ENCODE measurements at regions of chr11 and their contacts with region 1.

Region 1: GRCh38 chr11:130002846-130003716 is 446 bp upstream of the PRDM10 start:
- DNase-seq: peak; percentile 98
- ATAC-seq: peak; percentile 83
- H3K4me3 ChIP-seq: peak overlapping the region; percentile 62
- H3K27ac ChIP-seq: peak overlapping the region; percentile 90
- H3K4me1 ChIP-seq: no peaks in the 10 kb centered on the region
- H3K27me3 ChIP-seq: no peaks in the 10 kb centered on the region
- CTCF ChIP-seq: no peak
- POLR2A ChIP-seq: peak; percentile 92
- RAD21 ChIP-seq: 0 out of 2 replicates have a peak, but pooled peaks have one; percentile 23

Region 2: GRCh38 chr11:128981254-128981653 is 1021.8 kb before region 1 on chr11:
- CTCF ChIA-PET with region 1: no interaction called
- POLR2A ChIA-PET with region 1: interaction called, 19 read pairs
- dilution Hi-C with region 1: no loop called
- in situ Hi-C with region 1: no loop called
- intact Hi-C with region 1: no loop called
- DNase-seq: no peak
- ATAC-seq: no peak
- H3K4me3 ChIP-seq: no peak overlapping the region
- H3K27ac ChIP-seq: no peak overlapping the region
- H3K4me1 ChIP-seq: no peaks in the 10 kb centered on the region
- H3K27me3 ChIP-seq: no peaks in the 10 kb centered on the region
- CTCF ChIP-seq: no peak
- POLR2A ChIP-seq: no peak
- RAD21 ChIP-seq: no peak

Region 3: GRCh38 chr11:129453293-129453721 is 549.8 kb before region 1 on chr11:
- CTCF ChIA-PET with region 1: no interaction called
- POLR2A ChIA-PET with region 1: no interaction called
- dilution Hi-C with region 1: no loop called
- in situ Hi-C with region 1: no loop called
- intact Hi-C with region 1: no loop called
- DNase-seq: no peak
- ATAC-seq: no peak
- H3K4me3 ChIP-seq: no peak overlapping the region
- H3K27ac ChIP-seq: no peak overlapping the region
- H3K4me1 ChIP-seq: no peaks in the 10 kb centered on the region
- H3K27me3 ChIP-seq: no peaks in the 10 kb centered on the region
- CTCF ChIP-seq: no peak
- POLR2A ChIP-seq: no peak
- RAD21 ChIP-seq: no peak

Region 4: GRCh38 chr11:129828301-129828836 is 174.7 kb before region 1 on chr11:
- CTCF ChIA-PET with region 1: no interaction called
- POLR2A ChIA-PET with region 1: no interaction called
- dilution Hi-C with region 1: no loop called
- in situ Hi-C with region 1: no loop called
- intact Hi-C with region 1: no loop called
- DNase-seq: no peak
- ATAC-seq: no peak
- H3K4me3 ChIP-seq: no peak overlapping the region
- H3K27ac ChIP-seq: no peak overlapping the region
- H3K4me1 ChIP-seq: no peaks in the 10 kb centered on the region
- H3K27me3 ChIP-seq: 0 out of 2 replicates have a peak, but pooled peaks cover 2% of the 10 kb centered on the region
- CTCF ChIP-seq: no peak
- POLR2A ChIP-seq: no peak
- RAD21 ChIP-seq: no peak

Region 5: GRCh38 chr11:129881570-129882170 is 121.4 kb before region 1 on chr11:
- CTCF ChIA-PET with region 1: no interaction called
- POLR2A ChIA-PET with region 1: no interaction called
- dilution Hi-C with region 1: no loop called
- in situ Hi-C with region 1: no loop called
- intact Hi-C with region 1: no loop called
- DNase-seq: peak; percentile 21
- ATAC-seq: peak; percentile 85
- H3K4me3 ChIP-seq: no peak overlapping the region
- H3K27ac ChIP-seq: no peak overlapping the region
- H3K4me1 ChIP-seq: no peaks in the 10 kb centered on the region
- H3K27me3 ChIP-seq: no peaks in the 10 kb centered on the region
- CTCF ChIP-seq: peak; percentile 42
- POLR2A ChIP-seq: no peak
- RAD21 ChIP-seq: peak; percentile 46; the same call in 1 of the 2 replicates

Region 6: DNA sequence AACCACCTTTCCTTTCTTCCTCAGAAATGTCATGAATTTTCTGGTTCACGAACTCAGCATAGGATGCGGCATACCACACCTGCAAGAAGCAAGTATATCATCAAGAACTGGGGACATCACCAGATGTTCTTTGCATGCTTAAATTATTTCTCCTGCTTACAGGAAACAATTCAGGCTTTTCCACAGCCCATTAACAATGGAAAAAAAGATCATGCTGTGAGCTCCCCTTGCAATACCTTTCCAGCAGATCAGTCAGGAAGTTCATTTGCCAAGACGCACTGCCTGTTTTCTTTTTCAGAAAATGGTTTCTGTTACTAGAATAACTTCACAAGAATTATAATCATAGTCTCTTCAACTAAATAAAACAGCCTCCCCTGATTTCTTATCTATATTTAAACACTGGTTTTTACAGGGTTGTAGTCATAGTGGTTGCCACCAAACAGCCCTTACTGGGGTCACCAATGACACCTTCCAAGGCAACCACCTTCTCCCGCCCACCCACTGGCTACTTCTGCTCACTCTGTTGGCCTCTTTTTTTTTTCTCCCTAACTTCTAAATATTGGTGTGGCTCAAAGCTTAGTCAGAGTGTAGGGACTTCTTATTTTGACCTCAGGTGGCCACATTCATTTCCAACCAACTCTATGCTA is 65.4 kb before region 1 on chr11:
- CTCF ChIA-PET with region 1: no interaction called
- POLR2A ChIA-PET with region 1: no interaction called
- dilution Hi-C with region 1: no loop called
- in situ Hi-C with region 1: no loop called
- intact Hi-C with region 1: no loop called
- DNase-seq: no peak
- ATAC-seq: no peak
- H3K4me3 ChIP-seq: no peak overlapping the region
- H3K27ac ChIP-seq: no peak overlapping the region
- H3K4me1 ChIP-seq: no peaks in the 10 kb centered on the region
- H3K27me3 ChIP-seq: no peaks in the 10 kb centered on the region
- CTCF ChIP-seq: no peak
- POLR2A ChIP-seq: no peak
- RAD21 ChIP-seq: no peak

Region 7: DNA sequence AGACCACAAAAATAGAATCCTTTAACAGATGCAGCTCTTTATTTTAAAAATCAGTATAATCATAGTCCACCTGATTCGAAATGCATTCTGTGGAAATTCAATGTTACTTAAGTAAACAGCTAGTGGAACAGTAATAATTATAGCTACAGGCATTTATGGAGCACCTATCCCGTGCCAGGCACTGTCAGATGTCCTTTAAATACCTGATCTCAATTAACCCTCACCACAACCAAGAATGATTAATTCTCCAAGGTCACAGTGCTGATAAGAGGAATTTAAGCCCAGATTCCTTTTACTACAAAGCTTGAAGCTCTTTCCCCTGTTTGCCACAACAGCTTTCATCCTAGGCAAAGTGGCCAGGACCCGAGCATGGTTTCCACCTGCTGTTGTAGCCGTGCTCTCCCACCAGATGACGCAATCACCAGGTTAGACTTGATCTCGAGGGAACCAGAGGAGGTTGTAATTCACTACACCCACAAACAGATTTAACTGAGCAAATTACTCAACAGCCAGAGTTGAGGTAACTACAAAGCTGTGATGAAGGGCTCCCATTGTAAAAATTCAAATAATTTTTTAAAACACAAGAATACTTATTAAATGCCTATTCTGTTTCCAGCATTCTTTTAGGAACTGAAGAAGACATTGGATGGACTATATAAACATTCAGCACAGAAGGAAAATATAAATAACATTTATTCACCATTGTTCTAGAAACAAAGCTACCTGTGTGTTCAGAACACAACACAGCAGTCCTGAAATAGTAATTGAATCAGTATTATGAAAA is 10.7 kb before region 1 on chr11:
- CTCF ChIA-PET with region 1: no interaction called
- POLR2A ChIA-PET with region 1: interaction called, 19 read pairs
- dilution Hi-C with region 1: no loop called
- in situ Hi-C with region 1: no loop called
- intact Hi-C with region 1: no loop called
- DNase-seq: peak; percentile 22
- ATAC-seq: no peak
- H3K4me3 ChIP-seq: no peak overlapping the region
- H3K27ac ChIP-seq: no peak overlapping the region
- H3K4me1 ChIP-seq: peaks cover 3% of the 10 kb centered on the region; the same call in 1 of the 2 replicates
- H3K27me3 ChIP-seq: no peaks in the 10 kb centered on the region
- CTCF ChIP-seq: no peak
- POLR2A ChIP-seq: no peak
- RAD21 ChIP-seq: no peak

Region 8: DNA sequence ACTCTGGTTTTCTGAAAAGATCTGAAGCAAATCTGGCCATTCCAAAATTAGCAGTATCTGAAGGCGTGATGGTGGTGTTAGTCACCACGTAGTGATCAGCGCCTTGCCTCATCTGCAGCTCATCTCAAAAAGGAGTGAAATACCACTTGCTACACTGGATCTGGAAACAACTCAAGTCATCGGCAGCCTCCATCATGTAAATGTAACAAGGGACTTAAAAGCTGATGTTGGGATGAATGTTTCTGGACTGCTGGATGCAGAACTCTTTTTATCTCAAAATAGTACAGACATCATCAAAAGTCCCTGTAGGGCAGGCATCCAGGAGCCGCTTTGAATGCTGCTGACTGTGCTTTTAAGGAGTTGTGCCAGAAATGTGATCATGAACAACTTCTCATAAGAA is 52.5 kb after region 1 on chr11:
- CTCF ChIA-PET with region 1: no interaction called
- POLR2A ChIA-PET with region 1: interaction called, 11 read pairs
- dilution Hi-C with region 1: no loop called
- in situ Hi-C with region 1: no loop called
- intact Hi-C with region 1: loop called (anchors 5 kb)
- DNase-seq: no peak
- ATAC-seq: no peak
- H3K4me3 ChIP-seq: no peak overlapping the region
- H3K27ac ChIP-seq: no peak overlapping the region
- H3K4me1 ChIP-seq: no peaks in the 10 kb centered on the region
- H3K27me3 ChIP-seq: peaks cover 36% of the 10 kb centered on the region
- CTCF ChIP-seq: no peak
- POLR2A ChIP-seq: no peak
- RAD21 ChIP-seq: no peak

Region 9: GRCh38 chr11:130131961-130132850 is 129.1 kb after region 1 on chr11:
- CTCF ChIA-PET with region 1: interaction called, 11 read pairs
- POLR2A ChIA-PET with region 1: interaction called, 9 read pairs
- dilution Hi-C with region 1: no loop called
- in situ Hi-C with region 1: no loop called
- intact Hi-C with region 1: loop called (anchors 1 kb)
- DNase-seq: peak; percentile 66
- ATAC-seq: peak; percentile 96
- H3K4me3 ChIP-seq: no peak overlapping the region
- H3K27ac ChIP-seq: no peak overlapping the region
- H3K4me1 ChIP-seq: no peaks in the 10 kb centered on the region
- H3K27me3 ChIP-seq: no peaks in the 10 kb centered on the region
- CTCF ChIP-seq: peak; percentile 90
- POLR2A ChIP-seq: 0 out of 2 replicates have a peak, but pooled peaks have one; percentile 25
- RAD21 ChIP-seq: peak; percentile 94

Measured in IMR-90 (cell line).